ENCODE measurements at regions of chr19 and their contacts with region 1.

Region 1: DNA sequence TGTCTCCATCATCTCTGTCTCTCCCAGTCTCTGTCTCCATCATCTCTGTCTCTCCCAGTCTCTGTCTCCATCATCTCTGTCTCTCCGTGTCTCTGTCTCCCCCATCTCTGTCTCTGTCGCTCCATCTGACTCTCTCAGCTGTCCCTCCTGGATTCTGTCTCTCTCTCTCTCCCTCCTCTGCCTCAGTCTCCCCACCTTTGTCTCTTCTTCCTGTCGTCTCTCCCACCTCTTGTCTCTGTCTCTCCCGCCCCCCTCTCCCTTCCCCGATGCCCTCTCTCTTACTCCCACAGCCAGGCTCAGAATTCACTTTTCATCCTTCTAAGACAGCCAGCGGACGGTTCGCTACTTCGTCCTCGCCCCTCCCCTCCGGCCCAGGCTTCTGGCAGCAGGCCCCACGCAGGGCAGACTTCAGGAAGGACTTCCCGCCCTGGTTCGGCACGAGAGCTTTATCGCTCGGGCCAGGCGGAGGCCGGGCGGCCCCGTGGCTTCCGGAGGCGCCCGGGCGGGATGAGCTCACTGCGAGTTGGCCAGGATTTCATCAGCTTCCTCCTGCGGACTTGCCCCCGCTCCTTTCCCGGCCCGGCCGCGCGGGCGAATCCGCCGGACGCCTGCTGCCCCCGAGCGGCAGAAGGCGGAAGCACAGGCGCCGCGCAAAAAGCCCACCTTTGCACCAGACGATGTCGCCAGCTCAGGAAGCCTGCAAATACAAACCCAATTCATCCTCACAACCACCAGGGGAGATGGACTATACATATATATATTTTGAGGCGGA is 12.4 kb upstream of the CCDC9 start:
- DNase-seq: peak; percentile 87 to 98 (median 90)
- ATAC-seq: peak; percentile 83
- H3K4me3 ChIP-seq: peak overlapping the region; percentile 44
- H3K27ac ChIP-seq: peak overlapping the region; percentile 97
- H3K4me1 ChIP-seq: peaks cover 35 to 50% of the 10 kb centered on the region in 2 experiments
- H3K27me3 ChIP-seq: no peaks in the 10 kb centered on the region
- CTCF ChIP-seq: peak; percentile 98 to 99 (median 98)
- EP300 ChIP-seq: peak; percentile 100
- POLR2A ChIP-seq: peak; percentile 72
- RAD21 ChIP-seq: peak; percentile 97 to 99

Region 2: DNA sequence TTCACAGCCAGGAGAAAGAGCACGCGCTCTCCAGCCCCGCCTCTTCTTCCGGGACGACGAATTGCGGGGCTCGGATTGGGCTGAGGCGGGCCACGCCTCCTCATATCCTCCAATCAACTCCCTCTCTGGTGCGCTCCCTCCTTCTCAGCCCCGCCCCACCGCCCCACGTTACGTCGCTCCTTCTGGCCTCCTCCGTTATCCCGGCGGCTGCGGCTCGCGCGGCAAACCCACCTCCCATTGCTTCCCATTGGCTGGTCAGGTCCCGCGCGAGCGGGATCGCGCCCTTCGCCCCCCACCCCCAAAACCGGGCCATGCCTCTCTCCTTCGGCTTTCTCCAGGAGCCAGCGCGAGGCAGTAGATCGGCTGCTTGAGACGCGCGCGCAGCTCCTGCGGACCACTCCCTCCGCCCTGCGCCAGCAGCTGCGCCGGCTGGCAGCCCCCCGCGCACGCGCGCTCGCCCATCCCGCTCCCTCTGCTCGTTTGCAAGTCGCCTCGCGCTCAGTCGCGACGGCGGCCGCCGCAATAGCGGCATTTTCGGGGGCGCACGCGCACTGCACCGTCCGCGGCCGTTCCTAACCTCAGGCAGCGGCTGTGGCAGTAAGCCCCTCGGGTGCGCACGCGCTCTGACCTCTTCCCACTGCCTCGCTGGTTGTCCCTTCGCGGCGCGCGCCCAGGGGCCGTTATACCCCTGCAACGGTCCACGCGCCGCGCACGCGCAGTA is 383.7 kb before region 1 on chr19:
- CTCF ChIA-PET with region 1: no interaction called
- POLR2A ChIA-PET with region 1: no interaction called
- in situ Hi-C with region 1: loop called (anchors 10 kb)
- intact Hi-C with region 1: loop called (anchors 10 kb)
- DNase-seq: peak; percentile 93 to 99 (median 95)
- ATAC-seq: peak; percentile 86
- H3K4me3 ChIP-seq: peak overlapping the region; percentile 73
- H3K27ac ChIP-seq: peak overlapping the region; percentile 99
- H3K4me1 ChIP-seq: peaks cover 31 to 33% of the 10 kb centered on the region in 2 experiments; a peak in 4 of 5 replicates
- H3K27me3 ChIP-seq: no peaks in the 10 kb centered on the region
- CTCF ChIP-seq: no peak
- EP300 ChIP-seq: no peak; the same call in 1 of the 2 replicates
- POLR2A ChIP-seq: peak; percentile 95
- RAD21 ChIP-seq: 0 out of 4 replicates have a peak, but pooled peaks have one; percentile 11

Region 3: GRCh38 chr19:47075179-47075810 is 168.7 kb before region 1 on chr19:
- CTCF ChIA-PET with region 1: interaction called, 11 read pairs
- POLR2A ChIA-PET with region 1: no interaction called
- in situ Hi-C with region 1: no loop called
- intact Hi-C with region 1: loop called (anchors 1 kb)
- DNase-seq: no peak
- ATAC-seq: no peak
- H3K4me3 ChIP-seq: no peak overlapping the region
- H3K27ac ChIP-seq: no peak overlapping the region
- H3K4me1 ChIP-seq: peaks cover 0 to 8% of the 10 kb centered on the region in 2 experiments; a peak in 2 of 5 replicates
- H3K27me3 ChIP-seq: no peaks in the 10 kb centered on the region
- CTCF ChIP-seq: no peak
- EP300 ChIP-seq: no peak
- POLR2A ChIP-seq: no peak
- RAD21 ChIP-seq: no peak

Region 4: GRCh38 chr19:47152224-47153017 is 91.5 kb before region 1 on chr19:
- CTCF ChIA-PET with region 1: interaction called, 11 read pairs
- POLR2A ChIA-PET with region 1: interaction called, 16 read pairs
- in situ Hi-C with region 1: loop called (anchors 5 kb)
- intact Hi-C with region 1: loop called (anchors 5 kb)
- DNase-seq: no peak
- ATAC-seq: no peak
- H3K4me3 ChIP-seq: no peak overlapping the region
- H3K27ac ChIP-seq: peak overlapping the region; percentile 10; the same call in 1 of the 3 replicates
- H3K4me1 ChIP-seq: peaks cover 2 to 10% of the 10 kb centered on the region in 2 experiments; a peak in 3 of 5 replicates
- H3K27me3 ChIP-seq: no peaks in the 10 kb centered on the region
- CTCF ChIP-seq: no peak
- EP300 ChIP-seq: no peak
- POLR2A ChIP-seq: no peak
- RAD21 ChIP-seq: no peak

Region 5: GRCh38 chr19:47225746-47226425 is 18.1 kb before region 1 on chr19:
- CTCF ChIA-PET with region 1: interaction called, 4 read pairs
- POLR2A ChIA-PET with region 1: interaction called, 112 read pairs
- in situ Hi-C with region 1: no loop called
- intact Hi-C with region 1: loop called (anchors 1 kb)
- DNase-seq: peak; percentile 92 to 97 (median 92)
- ATAC-seq: peak; percentile 73
- H3K4me3 ChIP-seq: peak overlapping the region; percentile 100
- H3K27ac ChIP-seq: peak overlapping the region; percentile 93
- H3K4me1 ChIP-seq: peaks cover 16 to 67% of the 10 kb centered on the region in 2 experiments
- H3K27me3 ChIP-seq: no peaks in the 10 kb centered on the region
- CTCF ChIP-seq: peak in 2 of 3 experiments; percentile 49 to 57; a peak in 3 of 6 replicates
- EP300 ChIP-seq: peak; percentile 27
- POLR2A ChIP-seq: peak; percentile 96; the same call in 1 of the 2 replicates
- RAD21 ChIP-seq: peak in 1 of 2 experiments; percentile 11; a peak in 2 of 4 replicates

Region 6: GRCh38 chr19:47256688-47257443 is 12.9 kb after region 1 on chr19:
- CTCF ChIA-PET with region 1: interaction called, 4 read pairs
- POLR2A ChIA-PET with region 1: interaction called, 48 read pairs
- in situ Hi-C with region 1: no loop called
- intact Hi-C with region 1: no loop called
- DNase-seq: peak; percentile 96 to 99 (median 97)
- ATAC-seq: peak; percentile 89
- H3K4me3 ChIP-seq: peak overlapping the region; percentile 53
- H3K27ac ChIP-seq: peak overlapping the region; percentile 96
- H3K4me1 ChIP-seq: peaks cover 8 to 29% of the 10 kb centered on the region in 2 experiments; a peak in 4 of 5 replicates
- H3K27me3 ChIP-seq: no peaks in the 10 kb centered on the region
- CTCF ChIP-seq: no peak
- EP300 ChIP-seq: no peak; the same call in 1 of the 2 replicates
- POLR2A ChIP-seq: no peak
- RAD21 ChIP-seq: no peak